Dendritic cell treated with granulocyte-macrophage colony-stimulating factor and Interleukin-4, amounts not matched to agents 40 ng/mL and 50 ng/mL, for 4 days (primary cell): ENCODE measurements at regions of chr18 and their contacts with region 1.

Region 1: GRCh38 chr18:35240664-35241447 is at the start of gene ZNF397:
- H3K4me3 Mint-ChIP-seq: peak within 1 kb of the TSS; percentile 92
- H3K27ac Mint-ChIP-seq: peak within 1 kb of the TSS; percentile 100
- H3K4me1 Mint-ChIP-seq: peaks cover 5% of the 10 kb centered on the region
- H3K27me3 Mint-ChIP-seq: no peaks in the 10 kb centered on the region

Region 2: GRCh38 chr18:35143622-35144596 is 96.9 kb before region 1 on chr18:
- intact Hi-C with region 1: no loop called
- H3K4me3 Mint-ChIP-seq: no peak overlapping the region
- H3K27ac Mint-ChIP-seq: no peak overlapping the region
- H3K4me1 Mint-ChIP-seq: peaks cover 10% of the 10 kb centered on the region
- H3K27me3 Mint-ChIP-seq: no peaks in the 10 kb centered on the region

Region 3: GRCh38 chr18:35174093-35174731 is 66.6 kb before region 1 on chr18:
- intact Hi-C with region 1: no loop called
- H3K4me3 Mint-ChIP-seq: no peak overlapping the region
- H3K27ac Mint-ChIP-seq: no peak overlapping the region
- H3K4me1 Mint-ChIP-seq: no peaks in the 10 kb centered on the region
- H3K27me3 Mint-ChIP-seq: no peaks in the 10 kb centered on the region

Region 4: DNA sequence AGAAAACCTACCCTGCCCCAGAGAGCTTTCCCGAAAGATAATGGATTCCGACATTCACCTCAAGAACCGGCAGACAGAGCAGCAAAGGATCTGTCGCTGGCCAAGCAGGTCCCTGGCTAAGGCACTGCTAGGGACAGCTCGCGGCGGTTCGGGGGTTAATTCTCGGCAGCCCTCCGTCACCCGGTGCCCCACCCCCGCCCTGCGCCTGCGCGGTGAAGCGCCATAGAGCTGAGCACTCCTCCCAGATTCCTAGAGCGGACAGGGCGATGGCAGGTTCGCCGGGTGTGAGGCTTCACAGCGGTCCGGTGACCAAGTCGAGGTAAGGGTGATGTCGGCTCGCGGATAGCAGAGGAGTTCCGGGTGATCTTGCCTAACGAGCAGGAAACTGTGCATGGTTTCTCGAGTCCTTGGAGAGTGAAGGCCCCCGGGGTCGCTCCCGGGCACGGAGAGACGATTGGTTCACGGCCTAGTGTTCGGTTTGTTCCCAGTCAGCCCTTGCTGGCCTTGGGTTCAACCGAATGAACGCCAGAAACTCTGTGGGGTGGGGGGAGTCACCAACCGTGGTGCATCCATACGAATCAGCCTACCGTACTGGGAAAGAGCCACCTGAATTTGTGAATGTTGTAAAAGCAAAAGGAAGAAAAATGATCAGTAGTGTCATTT is 49.3 kb after region 1 on chr18 and contains the start of gene ZSCAN30:
- intact Hi-C with region 1: loop called (anchors 1 kb)
- H3K4me3 Mint-ChIP-seq: peak within 1 kb of the TSS; percentile 96
- H3K27ac Mint-ChIP-seq: peak within 1 kb of the TSS; percentile 90
- H3K4me1 Mint-ChIP-seq: peaks cover 26% of the 10 kb centered on the region
- H3K27me3 Mint-ChIP-seq: no peaks in the 10 kb centered on the region

Region 5: DNA sequence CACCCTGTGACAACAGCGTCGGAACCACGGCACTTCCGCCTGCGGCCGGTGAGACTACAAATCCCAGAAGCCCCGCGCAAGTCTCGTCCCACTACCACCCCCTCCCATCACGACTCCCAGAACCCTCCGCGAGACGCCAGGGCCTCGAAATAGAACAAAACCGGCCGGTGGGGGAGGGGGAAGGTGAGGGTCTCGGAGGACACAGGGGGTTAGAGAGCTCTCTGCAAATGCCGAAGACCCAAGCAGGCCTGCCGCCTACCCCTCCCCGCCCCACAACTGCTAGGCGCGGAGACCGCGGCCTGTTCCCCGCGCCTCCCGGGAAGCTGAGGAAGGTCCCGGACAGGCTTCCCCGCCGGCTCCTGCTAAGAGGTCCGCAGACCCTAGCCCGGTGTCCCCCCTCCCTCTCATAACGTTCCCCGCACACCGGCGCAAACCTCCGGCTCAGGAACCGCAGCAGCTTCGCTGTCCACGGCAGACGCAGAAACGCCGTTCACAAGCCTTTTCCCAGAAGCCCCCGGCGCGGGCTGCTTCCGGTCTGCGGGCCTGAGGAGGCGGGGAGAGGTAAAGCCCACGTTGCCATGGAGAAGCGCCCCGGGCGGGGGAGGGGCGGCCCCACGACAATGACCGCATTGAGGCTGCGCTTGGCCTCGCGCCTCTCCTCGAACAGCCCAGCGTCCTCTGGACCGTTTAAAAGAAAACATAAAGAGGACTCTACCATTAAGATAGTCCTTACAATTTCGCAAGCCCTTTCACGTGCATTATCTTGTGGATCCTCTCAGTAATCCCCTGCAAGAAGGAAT is 103.3 kb after region 1 on chr18 and contains the start of gene ZNF24:
- intact Hi-C with region 1: loop called (anchors 1 kb)
- H3K4me3 Mint-ChIP-seq: peak within 1 kb of the TSS; percentile 93
- H3K27ac Mint-ChIP-seq: peak within 1 kb of the TSS; percentile 89
- H3K4me1 Mint-ChIP-seq: peaks cover 49% of the 10 kb centered on the region
- H3K27me3 Mint-ChIP-seq: no peaks in the 10 kb centered on the region

Region 6: GRCh38 chr18:35972197-35973052 is 731.6 kb after region 1 on chr18 and contains the start of gene RMP24:
- intact Hi-C with region 1: loop called (anchors 10 kb)
- H3K4me3 Mint-ChIP-seq: peak within 1 kb of the TSS; percentile 98
- H3K27ac Mint-ChIP-seq: peak within 1 kb of the TSS; percentile 98
- H3K4me1 Mint-ChIP-seq: peaks cover 41% of the 10 kb centered on the region
- H3K27me3 Mint-ChIP-seq: no peaks in the 10 kb centered on the region